CD14-positive monocyte (primary cell): ENCODE measurements at regions of chr6 and their contacts with region 1.

Region 1: GRCh38 chr6:79233611-79234149 is 802 bp downstream of the HMGN3 start:
- DNase-seq: peak; percentile 57 to 62 (median 60)
- H3K4me3 ChIP-seq: peak overlapping the region; percentile 92 to 95 (median 95)
- H3K4me3 Mint-ChIP-seq: peak overlapping the region; percentile 98 to 99
- H3K27ac ChIP-seq: peak overlapping the region; percentile 85 to 92
- H3K27ac Mint-ChIP-seq: peak overlapping the region; percentile 88 to 97 (median 93)
- H3K4me1 ChIP-seq: peaks cover 11 to 16% of the 10 kb centered on the region in 2 donors
- H3K4me1 Mint-ChIP-seq: peaks cover 24% of the 10 kb centered on the region
- H3K27me3 ChIP-seq: no peaks in the 10 kb centered on the region
- H3K27me3 Mint-ChIP-seq: no peaks in the 10 kb centered on the region
- CTCF ChIP-seq: peak; percentile 27

Region 2: GRCh38 chr6:78966542-78966941 is 267.1 kb before region 1 on chr6:
- intact Hi-C with region 1: no loop called
- DNase-seq: no peak
- H3K4me3 ChIP-seq: no peak overlapping the region
- H3K4me3 Mint-ChIP-seq: no peak overlapping the region
- H3K27ac ChIP-seq: no peak overlapping the region
- H3K27ac Mint-ChIP-seq: peak overlapping the region in 2 of 7 donors; percentile 10 to 87
- H3K4me1 ChIP-seq: no peaks in the 10 kb centered on the region
- H3K4me1 Mint-ChIP-seq: no peaks in the 10 kb centered on the region
- H3K27me3 ChIP-seq: no peaks in the 10 kb centered on the region
- H3K27me3 Mint-ChIP-seq: no peaks in the 10 kb centered on the region
- CTCF ChIP-seq: no peak

Region 3: DNA sequence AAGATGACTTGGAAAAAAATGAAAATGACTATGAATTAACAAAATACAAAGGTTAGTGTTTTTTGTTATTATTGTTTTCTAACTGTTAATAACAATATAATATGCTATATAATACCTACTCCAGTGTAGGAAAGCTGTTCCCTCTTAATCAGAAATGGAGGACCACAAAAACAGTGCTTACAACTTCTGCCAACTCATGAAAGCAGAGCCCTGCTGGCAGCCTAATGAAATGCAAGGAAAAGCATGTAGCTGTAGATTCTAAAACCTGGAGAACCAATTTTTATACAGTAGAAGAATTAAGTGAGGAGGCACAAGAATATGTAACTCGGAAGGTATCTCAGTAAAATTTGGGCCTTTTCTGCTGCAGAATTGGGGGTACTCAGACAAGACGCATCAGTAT is 185.1 kb before region 1 on chr6:
- intact Hi-C with region 1: no loop called
- DNase-seq: peak in 2 of 3 donors; percentile 5 to 12
- H3K4me3 ChIP-seq: no peak overlapping the region
- H3K4me3 Mint-ChIP-seq: no peak overlapping the region
- H3K27ac ChIP-seq: no peak overlapping the region
- H3K27ac Mint-ChIP-seq: no peak overlapping the region
- H3K4me1 ChIP-seq: no peaks in the 10 kb centered on the region
- H3K4me1 Mint-ChIP-seq: no peaks in the 10 kb centered on the region
- H3K27me3 ChIP-seq: no peaks in the 10 kb centered on the region
- H3K27me3 Mint-ChIP-seq: no peaks in the 10 kb centered on the region
- CTCF ChIP-seq: peak; percentile 57

Region 4: GRCh38 chr6:79078075-79079025 is 155.3 kb before region 1 on chr6 and contains the start of gene PHIP:
- intact Hi-C with region 1: loop called (anchors 5 to 10 kb)
- DNase-seq: peak; percentile 90 to 98 (median 94)
- H3K4me3 ChIP-seq: peak within 1 kb of the TSS; percentile 82 to 90 (median 84)
- H3K4me3 Mint-ChIP-seq: peak within 1 kb of the TSS; percentile 88 to 95
- H3K27ac ChIP-seq: peak within 1 kb of the TSS; percentile 92 to 96
- H3K27ac Mint-ChIP-seq: peak within 1 kb of the TSS; percentile 89 to 96 (median 95)
- H3K4me1 ChIP-seq: peaks cover 12 to 33% of the 10 kb centered on the region in 2 donors
- H3K4me1 Mint-ChIP-seq: peaks cover 36% of the 10 kb centered on the region
- H3K27me3 ChIP-seq: no peaks in the 10 kb centered on the region
- H3K27me3 Mint-ChIP-seq: no peaks in the 10 kb centered on the region
- CTCF ChIP-seq: no peak
- polyA plus RNA-seq, gene PHIP: 3.2 to 10.8 (median 5.1) TPM

Region 5: GRCh38 chr6:79101164-79101563 is 132.5 kb before region 1 on chr6:
- intact Hi-C with region 1: no loop called
- DNase-seq: no peak
- H3K4me3 ChIP-seq: no peak overlapping the region
- H3K4me3 Mint-ChIP-seq: no peak overlapping the region
- H3K27ac ChIP-seq: no peak overlapping the region
- H3K27ac Mint-ChIP-seq: no peak overlapping the region
- H3K4me1 ChIP-seq: no peaks in the 10 kb centered on the region
- H3K4me1 Mint-ChIP-seq: peaks cover under 1% of the 10 kb centered on the region
- H3K27me3 ChIP-seq: no peaks in the 10 kb centered on the region
- H3K27me3 Mint-ChIP-seq: peaks cover 0 to 4% (median 0%) of the 10 kb centered on the region in 3 donors
- CTCF ChIP-seq: no peak